ENCODE measurements at regions of chr21 and their contacts with region 1.

Region 1: DNA sequence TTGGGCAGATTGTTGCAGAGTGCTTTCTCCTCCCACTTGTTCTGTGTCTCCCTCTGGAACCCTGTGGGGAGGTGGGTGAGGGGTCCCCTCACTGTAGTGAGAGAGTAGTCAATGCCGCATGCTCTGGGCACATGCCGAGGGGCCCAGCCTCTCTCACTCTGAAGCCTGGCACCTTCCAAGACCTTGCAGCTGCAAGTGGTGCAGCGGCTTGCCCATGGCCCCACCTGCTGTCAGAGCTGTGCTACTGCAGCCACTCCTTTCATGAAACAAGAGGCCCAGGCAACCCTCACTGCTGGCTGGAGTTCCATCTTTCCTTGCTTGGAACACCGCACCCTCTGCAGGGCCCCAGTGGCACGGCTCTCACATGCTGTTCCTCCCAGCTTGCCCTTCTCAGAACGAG is 58.4 kb upstream of the COL6A1 start:
- DNase-seq: peak; percentile 81
- ATAC-seq: peak; percentile 90
- H3K4me3 Mint-ChIP-seq: no peak overlapping the region
- H3K27ac Mint-ChIP-seq: no peak overlapping the region
- H3K4me1 Mint-ChIP-seq: no peaks in the 10 kb centered on the region
- H3K27me3 Mint-ChIP-seq: peaks cover 33% of the 10 kb centered on the region
- CTCF ChIP-seq: peak; percentile 84

Region 2: GRCh38 chr21:45820171-45821091 is 102.7 kb before region 1 on chr21:
- CTCF ChIA-PET with region 1: interaction called, 10 read pairs
- POLR2A ChIA-PET with region 1: no interaction called
- DNase-seq: peak; percentile 89
- ATAC-seq: peak; percentile 92
- H3K4me3 Mint-ChIP-seq: no peak overlapping the region
- H3K27ac Mint-ChIP-seq: peak overlapping the region; percentile 85; the same call in 1 of the 2 replicates
- H3K4me1 Mint-ChIP-seq: peaks cover 22% of the 10 kb centered on the region
- H3K27me3 Mint-ChIP-seq: no peaks in the 10 kb centered on the region
- CTCF ChIP-seq: peak; percentile 68

Region 3: GRCh38 chr21:45950734-45951515 is 27.8 kb after region 1 on chr21:
- CTCF ChIA-PET with region 1: interaction called, 13 read pairs
- POLR2A ChIA-PET with region 1: no interaction called
- DNase-seq: no peak
- ATAC-seq: peak; percentile 41
- H3K4me3 Mint-ChIP-seq: no peak overlapping the region
- H3K27ac Mint-ChIP-seq: peak overlapping the region; percentile 26; the same call in 1 of the 2 replicates
- H3K4me1 Mint-ChIP-seq: peaks cover 14% of the 10 kb centered on the region
- H3K27me3 Mint-ChIP-seq: peaks cover 6% of the 10 kb centered on the region
- CTCF ChIP-seq: no peak

Measured in WTC11 (cell line).